ENCODE measurements at regions of chr1 and their contacts with region 1.

Region 1: GRCh38 chr1:55140546-55140983 is 74.6 kb downstream of the USP24 start:
- DNase-seq: peak; percentile 75
- H3K4me3 Mint-ChIP-seq: no peak overlapping the region
- H3K27ac Mint-ChIP-seq: peak overlapping the region; percentile 40
- H3K4me1 Mint-ChIP-seq: peaks cover 14% of the 10 kb centered on the region
- H3K27me3 Mint-ChIP-seq: no peaks in the 10 kb centered on the region

Region 2: GRCh38 chr1:55073187-55073916 is 67.2 kb before region 1 on chr1:
- CTCF ChIA-PET with region 1: interaction called, 3 read pairs
- POLR2A ChIA-PET with region 1: no interaction called
- intact Hi-C with region 1: loop called (anchors 1 kb)
- DNase-seq: peak; percentile 55
- H3K4me3 Mint-ChIP-seq: no peak overlapping the region
- H3K27ac Mint-ChIP-seq: peak overlapping the region; percentile 91
- H3K4me1 Mint-ChIP-seq: peaks cover 22% of the 10 kb centered on the region
- H3K27me3 Mint-ChIP-seq: no peaks in the 10 kb centered on the region

Region 3: DNA sequence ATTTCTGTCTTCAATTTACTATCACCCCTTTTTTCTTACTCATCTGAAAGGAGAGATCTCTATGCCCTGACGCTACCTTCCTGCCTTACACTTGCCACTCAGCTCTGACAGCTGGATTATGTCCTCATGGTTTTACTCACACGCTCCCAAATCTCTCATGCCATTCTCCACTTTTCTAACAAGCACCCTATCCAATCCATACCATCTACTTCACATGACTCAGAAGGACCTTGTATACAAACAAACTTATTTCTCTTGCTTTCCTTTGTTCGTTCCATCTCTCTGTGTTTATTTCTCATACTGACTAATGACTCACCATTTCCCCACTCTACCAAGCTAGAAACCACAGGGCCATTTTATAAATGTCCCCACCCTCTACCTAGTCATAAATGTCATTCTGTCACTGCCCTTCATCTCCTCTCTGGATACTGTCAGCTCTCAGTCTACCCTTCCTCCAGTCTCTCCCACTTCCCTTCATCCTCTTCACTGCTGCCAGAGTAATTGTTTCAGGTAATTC is 12.7 kb before region 1 on chr1:
- CTCF ChIA-PET with region 1: interaction called, 7 read pairs
- POLR2A ChIA-PET with region 1: interaction called, 3 read pairs
- intact Hi-C with region 1: loop called (anchors 1 kb)
- DNase-seq: peak; percentile 35
- H3K4me3 Mint-ChIP-seq: no peak overlapping the region
- H3K27ac Mint-ChIP-seq: peak overlapping the region; percentile 79
- H3K4me1 Mint-ChIP-seq: peaks cover 33% of the 10 kb centered on the region
- H3K27me3 Mint-ChIP-seq: no peaks in the 10 kb centered on the region

Region 4: GRCh38 chr1:55215256-55216021 is 74.9 kb after region 1 on chr1 and contains the start of gene USP24:
- CTCF ChIA-PET with region 1: interaction called, 13 read pairs
- POLR2A ChIA-PET with region 1: no interaction called
- intact Hi-C with region 1: no loop called
- DNase-seq: peak; percentile 85
- H3K4me3 Mint-ChIP-seq: peak within 1 kb of the TSS; percentile 94
- H3K27ac Mint-ChIP-seq: peak within 1 kb of the TSS; percentile 94
- H3K4me1 Mint-ChIP-seq: peaks cover 52% of the 10 kb centered on the region
- H3K27me3 Mint-ChIP-seq: no peaks in the 10 kb centered on the region
- total RNA-seq, gene USP24: 37.4 to 39.9 TPM

Region 5: DNA sequence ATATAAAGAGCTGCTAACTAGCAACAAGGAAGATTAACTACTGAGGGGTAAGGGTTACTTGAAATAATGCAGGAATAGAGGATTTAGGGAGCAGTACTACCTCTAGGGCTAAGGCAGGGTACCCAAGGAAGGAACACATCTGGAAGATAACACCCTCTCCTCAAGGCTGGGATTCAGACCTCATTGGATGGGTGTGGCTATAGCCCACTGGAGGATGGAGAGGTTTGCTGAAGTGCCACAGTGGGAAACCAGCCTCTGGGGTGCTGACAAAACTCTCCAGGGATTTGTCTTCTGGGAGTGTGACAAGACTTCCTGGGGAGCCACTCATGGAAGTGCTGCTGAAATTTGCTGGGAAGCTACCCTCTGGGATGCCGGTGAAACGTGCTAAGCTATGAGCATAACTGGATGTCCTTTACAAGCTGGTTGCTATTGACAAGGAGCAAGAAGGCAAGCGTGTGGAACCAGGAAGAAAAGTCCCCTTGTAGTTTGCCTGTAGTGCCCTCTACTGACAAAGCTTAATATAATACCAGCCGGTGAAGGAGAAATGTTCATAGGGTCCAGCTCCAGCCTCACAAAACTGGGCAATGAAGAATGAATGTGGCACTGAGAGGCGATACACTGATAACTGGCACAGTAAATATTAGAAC is 197.4 kb after region 1 on chr1:
- CTCF ChIA-PET with region 1: interaction called, 10 read pairs
- POLR2A ChIA-PET with region 1: no interaction called
- intact Hi-C with region 1: loop called (anchors 1 kb)
- DNase-seq: peak; percentile 25
- H3K4me3 Mint-ChIP-seq: no peak overlapping the region
- H3K27ac Mint-ChIP-seq: no peak overlapping the region
- H3K4me1 Mint-ChIP-seq: no peaks in the 10 kb centered on the region
- H3K27me3 Mint-ChIP-seq: peaks cover 2% of the 10 kb centered on the region

Region 6: DNA sequence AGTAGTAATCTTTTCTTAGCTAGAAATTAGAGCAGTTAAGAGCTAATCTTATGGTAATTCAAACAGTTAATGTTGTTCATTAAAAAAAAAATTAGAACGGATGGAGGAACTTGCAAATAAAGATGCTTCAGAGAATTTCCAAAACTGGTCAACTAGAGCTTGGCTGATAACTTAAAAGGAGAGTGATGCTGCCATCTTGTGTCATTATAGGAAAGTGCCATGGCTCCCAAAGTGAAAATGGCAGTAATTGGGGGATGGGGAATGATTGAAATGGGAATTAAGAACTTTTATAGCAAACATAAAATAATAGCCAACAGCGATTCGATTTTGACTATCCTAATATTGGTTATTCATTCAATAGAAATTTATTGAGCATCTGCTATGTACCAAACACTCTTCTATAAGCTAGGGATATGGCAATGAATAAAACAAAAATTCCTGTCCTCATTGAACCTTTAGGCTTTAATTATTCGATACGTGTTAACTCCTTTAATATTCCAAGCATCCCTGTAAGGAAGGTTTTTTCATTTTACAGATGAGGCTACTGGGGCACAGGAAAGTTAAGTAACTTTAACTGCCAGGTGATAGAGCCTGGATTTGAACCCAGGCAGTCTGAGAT is 1444.5 kb after region 1 on chr1:
- CTCF ChIA-PET with region 1: no interaction called
- POLR2A ChIA-PET with region 1: no interaction called
- intact Hi-C with region 1: loop called (anchors 10 kb)
- DNase-seq: no peak
- H3K4me3 Mint-ChIP-seq: no peak overlapping the region
- H3K27ac Mint-ChIP-seq: no peak overlapping the region
- H3K4me1 Mint-ChIP-seq: no peaks in the 10 kb centered on the region
- H3K27me3 Mint-ChIP-seq: peaks cover 13% of the 10 kb centered on the region